ENCODE measurements at regions of chr15 and their contacts with region 1.

Region 1: DNA sequence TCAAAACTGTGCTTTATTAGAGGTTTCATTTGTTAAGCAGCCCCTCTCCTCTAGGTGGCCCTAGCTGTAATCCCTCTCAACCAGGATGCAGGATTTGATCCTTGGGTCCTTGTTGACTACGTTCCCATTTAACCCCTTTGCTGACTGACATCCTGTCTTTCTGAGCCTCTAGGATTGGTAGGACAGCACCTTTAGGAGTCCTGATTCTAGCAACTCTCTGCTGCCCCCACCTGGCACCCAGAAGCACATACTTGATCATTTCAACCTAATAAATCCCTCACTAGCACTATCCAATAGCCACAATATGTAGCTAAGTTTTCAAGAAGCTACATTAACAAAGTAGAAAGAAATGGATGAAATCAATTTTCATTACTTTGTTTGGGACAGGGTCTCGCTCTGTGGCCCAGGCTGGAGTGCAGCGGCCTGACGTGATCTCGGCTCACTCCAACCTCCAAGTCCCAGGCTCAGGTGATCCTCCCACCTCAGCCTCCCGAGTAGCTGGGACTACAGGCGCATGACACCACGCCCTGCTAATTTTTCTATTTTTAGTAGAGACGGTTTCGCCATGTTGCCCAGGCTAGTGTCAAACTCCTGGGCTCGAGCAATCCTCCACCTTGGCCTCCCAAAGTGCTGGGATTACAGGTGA is 28.3 kb downstream of the RSL24D1 start:
- DNase-seq: peak; percentile 77
- H3K4me3 Mint-ChIP-seq: no peak overlapping the region
- H3K27ac Mint-ChIP-seq: no peak overlapping the region
- H3K4me1 Mint-ChIP-seq: no peaks in the 10 kb centered on the region
- H3K27me3 Mint-ChIP-seq: no peaks in the 10 kb centered on the region
- CTCF ChIP-seq: peak; percentile 68

Region 2: DNA sequence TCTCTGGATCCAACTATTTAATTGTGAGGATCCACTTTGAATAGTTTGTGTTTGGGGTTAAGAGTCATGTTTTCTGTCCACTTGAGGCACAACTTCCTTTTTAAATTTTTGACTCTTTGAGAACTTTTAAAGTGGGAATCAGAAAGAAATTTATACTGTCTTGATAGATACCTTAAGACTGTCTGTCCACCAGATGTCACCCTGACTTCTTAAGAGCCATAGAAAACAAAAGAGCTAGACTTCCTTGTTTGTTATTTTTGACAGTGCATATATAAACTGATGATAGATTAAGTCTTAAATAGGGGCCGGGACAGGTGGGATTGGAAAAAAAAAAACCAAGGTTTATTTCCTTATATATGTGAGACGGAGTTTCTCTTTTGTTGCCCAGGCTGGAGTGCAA is 1356.9 kb before region 1 on chr15:
- CTCF ChIA-PET with region 1: interaction called, 8 read pairs
- POLR2A ChIA-PET with region 1: no interaction called
- intact Hi-C with region 1: loop called (anchors 5 kb)
- DNase-seq: peak; percentile 34
- H3K4me3 Mint-ChIP-seq: no peak overlapping the region
- H3K27ac Mint-ChIP-seq: no peak overlapping the region
- H3K4me1 Mint-ChIP-seq: peaks cover 4% of the 10 kb centered on the region
- H3K27me3 Mint-ChIP-seq: peaks cover 70% of the 10 kb centered on the region
- CTCF ChIP-seq: peak; percentile 21

Region 3: GRCh38 chr15:54082836-54083492 is 1085.5 kb before region 1 on chr15:
- CTCF ChIA-PET with region 1: interaction called, 4 read pairs
- POLR2A ChIA-PET with region 1: no interaction called
- intact Hi-C with region 1: loop called (anchors 5 kb)
- DNase-seq: peak; percentile 25
- H3K4me3 Mint-ChIP-seq: no peak overlapping the region
- H3K27ac Mint-ChIP-seq: no peak overlapping the region
- H3K4me1 Mint-ChIP-seq: no peaks in the 10 kb centered on the region
- H3K27me3 Mint-ChIP-seq: peaks cover 55% of the 10 kb centered on the region
- CTCF ChIP-seq: peak; percentile 65

Region 4: DNA sequence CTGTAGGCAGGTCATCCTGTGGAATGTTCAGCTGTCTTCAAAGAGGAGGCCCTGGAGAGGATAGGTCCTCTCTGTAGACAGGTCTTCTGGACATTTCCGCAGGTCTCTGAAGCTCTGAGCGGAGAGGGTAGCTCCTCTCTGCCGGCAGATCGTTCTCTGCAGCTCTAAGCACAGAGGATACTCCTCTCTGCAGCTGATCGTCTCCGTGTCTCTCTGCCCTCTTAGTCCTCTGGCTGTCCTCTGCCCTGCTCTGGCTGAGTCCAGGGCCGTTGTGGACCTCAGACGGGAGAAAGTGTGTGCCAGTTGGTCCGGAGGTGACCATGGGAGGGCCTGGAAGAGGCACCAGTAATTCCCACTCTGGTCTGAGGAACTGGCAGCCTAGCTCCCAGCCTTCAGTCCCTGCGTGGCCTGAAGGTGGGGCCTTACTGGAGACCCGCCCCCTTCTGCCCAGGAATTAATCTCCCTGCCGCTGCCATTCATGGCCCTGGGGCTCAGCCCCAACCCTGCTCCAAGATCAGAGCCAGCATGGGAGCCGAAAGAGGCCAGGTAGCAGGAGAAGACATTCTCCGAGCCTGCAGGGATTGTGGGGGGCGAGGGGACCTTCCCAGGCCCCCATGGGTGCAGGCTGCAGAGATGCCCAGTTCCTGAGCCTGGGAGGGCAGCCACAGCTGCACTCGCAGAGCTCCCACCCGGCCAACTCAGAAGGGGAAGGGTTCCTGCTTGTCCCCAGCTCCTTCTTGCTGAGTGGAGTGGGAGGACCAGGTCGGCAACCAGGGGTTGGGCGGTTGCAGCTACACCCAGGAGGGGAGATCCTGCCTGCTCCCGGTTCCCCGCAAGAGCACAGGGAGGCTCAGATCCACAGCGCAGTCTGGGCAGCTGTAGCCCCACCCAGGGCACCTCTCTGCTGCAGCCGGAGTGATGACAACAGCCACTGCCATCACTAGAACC is 460.4 kb before region 1 on chr15:
- CTCF ChIA-PET with region 1: no interaction called
- POLR2A ChIA-PET with region 1: no interaction called
- intact Hi-C with region 1: no loop called
- DNase-seq: no peak
- H3K4me3 Mint-ChIP-seq: no peak overlapping the region
- H3K27ac Mint-ChIP-seq: no peak overlapping the region
- H3K4me1 Mint-ChIP-seq: no peaks in the 10 kb centered on the region
- H3K27me3 Mint-ChIP-seq: peaks cover 30% of the 10 kb centered on the region
- CTCF ChIP-seq: no peak

Region 5: GRCh38 chr15:55183679-55184078 is 15.2 kb after region 1 on chr15:
- CTCF ChIA-PET with region 1: interaction called, 31 read pairs
- POLR2A ChIA-PET with region 1: interaction called, 3 read pairs
- intact Hi-C with region 1: no loop called
- DNase-seq: no peak
- H3K4me3 Mint-ChIP-seq: no peak overlapping the region
- H3K27ac Mint-ChIP-seq: no peak overlapping the region
- H3K4me1 Mint-ChIP-seq: peaks cover 25% of the 10 kb centered on the region
- H3K27me3 Mint-ChIP-seq: no peaks in the 10 kb centered on the region
- CTCF ChIP-seq: no peak

Region 6: GRCh38 chr15:55250392-55250791 is 81.9 kb after region 1 on chr15:
- CTCF ChIA-PET with region 1: no interaction called
- POLR2A ChIA-PET with region 1: no interaction called
- intact Hi-C with region 1: no loop called
- DNase-seq: peak; percentile 89
- H3K4me3 Mint-ChIP-seq: no peak overlapping the region
- H3K27ac Mint-ChIP-seq: peak overlapping the region; percentile 92
- H3K4me1 Mint-ChIP-seq: peaks cover 43% of the 10 kb centered on the region
- H3K27me3 Mint-ChIP-seq: no peaks in the 10 kb centered on the region
- CTCF ChIP-seq: no peak